Right ventricle myocardium superior (tissue), 1 donor: ENCODE measurements at regions of chr1 and their contacts with region 1.

Region 1: GRCh38 chr1:92858564-92859399 is 26.9 kb downstream of the RPL5 start:
- DNase-seq: no peak
- ATAC-seq: peak; percentile 92

Region 2: GRCh38 chr1:92944901-92945747 is 86.3 kb after region 1 on chr1:
- intact Hi-C with region 1: no loop called
- DNase-seq: no peak
- ATAC-seq: peak; percentile 46

Region 3: DNA sequence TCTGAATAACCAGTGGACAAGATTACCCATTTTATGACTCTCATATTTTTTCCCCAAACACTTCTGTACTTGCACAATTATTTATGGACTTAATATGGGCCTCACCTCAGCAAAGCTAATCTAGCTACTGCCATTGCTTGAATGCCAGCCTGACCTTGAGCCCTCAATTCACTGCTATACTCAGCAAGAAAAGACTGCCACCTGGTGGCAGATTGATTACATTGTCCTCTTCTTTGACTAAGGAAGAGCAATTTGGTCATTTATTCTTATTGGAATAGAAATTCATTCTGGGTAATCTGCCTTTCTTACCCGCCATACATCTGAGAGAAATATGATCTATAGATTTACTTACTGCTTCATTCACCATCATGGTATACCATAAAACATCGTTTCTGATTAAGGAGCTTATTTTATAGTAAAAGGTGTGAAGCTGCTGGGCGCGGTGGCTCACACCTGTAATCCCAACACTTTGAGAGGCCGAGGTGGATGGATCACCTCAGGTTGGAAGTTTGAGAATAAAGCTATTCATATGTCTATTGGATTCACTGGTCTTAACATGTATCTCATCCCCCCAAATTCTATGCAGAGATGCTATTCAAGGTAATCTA is 135.4 kb after region 1 on chr1:
- intact Hi-C with region 1: loop called (anchors 2 kb)
- DNase-seq: no peak
- ATAC-seq: peak; percentile 98